ENCODE measurements at regions of chr2 and their contacts with region 1.

Region 1: GRCh38 chr2:191165176-191165643 is 14.4 kb upstream of the STAT4 start:
- DNase-seq: peak; percentile 42 to 65
- ATAC-seq: peak; percentile 65 to 81
- H3K4me3 ChIP-seq: no peak overlapping the region
- H3K27ac ChIP-seq: peak overlapping the region; percentile 85 to 95
- H3K4me1 ChIP-seq: peaks cover 51% of the 10 kb centered on the region
- CTCF ChIP-seq: peak; percentile 92
- EP300 ChIP-seq: no peak
- POLR2A ChIP-seq: no peak
- RAD21 ChIP-seq: peak; percentile 95 to 98

Region 2: GRCh38 chr2:190746971-190747761 is 418.0 kb before region 1 on chr2:
- CTCF ChIA-PET with region 1: no interaction called
- POLR2A ChIA-PET with region 1: no interaction called
- DNase-seq: no peak
- ATAC-seq: no peak
- H3K4me3 ChIP-seq: no peak overlapping the region
- H3K27ac ChIP-seq: no peak overlapping the region
- H3K4me1 ChIP-seq: no peaks in the 10 kb centered on the region
- CTCF ChIP-seq: no peak
- EP300 ChIP-seq: no peak
- POLR2A ChIP-seq: no peak
- RAD21 ChIP-seq: no peak

Region 3: GRCh38 chr2:191150600-191151330 is 14.4 kb before region 1 on chr2 and contains the start of gene STAT4:
- CTCF ChIA-PET with region 1: interaction called, 25 read pairs
- POLR2A ChIA-PET with region 1: no interaction called
- DNase-seq: peak; percentile 43 to 67
- ATAC-seq: peak; percentile 86 to 91
- H3K4me3 ChIP-seq: peak within 1 kb of the TSS; percentile 75
- H3K27ac ChIP-seq: peak within 1 kb of the TSS; percentile 65 to 84
- H3K4me1 ChIP-seq: peaks cover 29% of the 10 kb centered on the region; the same call in 2 of the 3 replicates
- CTCF ChIP-seq: no peak
- EP300 ChIP-seq: no peak
- POLR2A ChIP-seq: 0 out of 2 replicates have a peak, but pooled peaks have one; percentile 5
- RAD21 ChIP-seq: no peak
- polyA plus RNA-seq, gene STAT4: 32.4 and 34.4 TPM in 2 replicates

Region 4: DNA sequence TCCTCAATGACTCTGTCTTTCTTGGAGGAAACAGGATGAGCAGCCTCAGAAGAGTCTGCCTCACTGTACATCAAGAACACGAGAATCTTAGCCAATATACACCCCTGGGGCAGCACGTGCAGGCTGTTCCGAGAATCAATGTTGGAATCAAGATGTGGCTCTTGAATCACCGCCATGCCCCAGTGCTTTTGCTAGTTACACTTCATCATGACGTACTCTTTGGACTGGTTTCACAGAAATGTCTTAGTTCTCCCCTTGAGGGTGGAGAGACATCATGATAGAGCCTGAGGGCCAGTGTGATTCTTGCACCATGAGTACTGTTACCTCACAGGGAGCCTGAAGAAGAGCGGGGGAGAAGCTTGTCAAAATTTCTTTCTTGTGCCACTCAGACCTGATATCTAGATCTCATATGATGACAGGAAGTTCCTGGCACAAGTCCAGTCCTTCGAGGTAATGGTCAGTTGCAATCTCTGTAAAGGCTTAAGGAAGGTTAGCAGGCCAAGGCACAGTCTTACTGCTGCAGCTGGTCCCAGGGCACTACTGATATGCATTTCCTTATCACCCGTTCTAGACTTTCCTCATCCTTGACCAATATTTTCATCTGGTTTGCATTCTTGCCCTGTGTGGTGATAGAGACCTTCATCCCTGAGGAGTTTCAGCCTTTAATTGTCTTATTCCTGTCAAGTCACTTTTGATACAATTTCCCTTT is 13.8 kb after region 1 on chr2:
- CTCF ChIA-PET with region 1: interaction called, 10 read pairs
- POLR2A ChIA-PET with region 1: no interaction called
- DNase-seq: peak in 1 of 2 experiments; percentile 66
- ATAC-seq: peak; percentile 56 to 65; a peak in 5 of 6 replicates
- H3K4me3 ChIP-seq: no peak overlapping the region
- H3K27ac ChIP-seq: peak overlapping the region; percentile 68 to 77
- H3K4me1 ChIP-seq: peaks cover 77% of the 10 kb centered on the region
- CTCF ChIP-seq: no peak
- EP300 ChIP-seq: peak; percentile 32 to 70; a peak in 2 of 5 replicates
- POLR2A ChIP-seq: no peak
- RAD21 ChIP-seq: no peak

Region 5: GRCh38 chr2:191512216-191512835 is 347.1 kb after region 1 on chr2:
- CTCF ChIA-PET with region 1: interaction called, 32 read pairs
- POLR2A ChIA-PET with region 1: no interaction called
- DNase-seq: no peak
- ATAC-seq: no peak
- H3K4me3 ChIP-seq: no peak overlapping the region
- H3K27ac ChIP-seq: peak overlapping the region; percentile 12 to 50; a peak in 4 of 6 replicates
- H3K4me1 ChIP-seq: peaks cover 47% of the 10 kb centered on the region
- CTCF ChIP-seq: no peak
- EP300 ChIP-seq: no peak
- POLR2A ChIP-seq: no peak
- RAD21 ChIP-seq: no peak

Region 6: DNA sequence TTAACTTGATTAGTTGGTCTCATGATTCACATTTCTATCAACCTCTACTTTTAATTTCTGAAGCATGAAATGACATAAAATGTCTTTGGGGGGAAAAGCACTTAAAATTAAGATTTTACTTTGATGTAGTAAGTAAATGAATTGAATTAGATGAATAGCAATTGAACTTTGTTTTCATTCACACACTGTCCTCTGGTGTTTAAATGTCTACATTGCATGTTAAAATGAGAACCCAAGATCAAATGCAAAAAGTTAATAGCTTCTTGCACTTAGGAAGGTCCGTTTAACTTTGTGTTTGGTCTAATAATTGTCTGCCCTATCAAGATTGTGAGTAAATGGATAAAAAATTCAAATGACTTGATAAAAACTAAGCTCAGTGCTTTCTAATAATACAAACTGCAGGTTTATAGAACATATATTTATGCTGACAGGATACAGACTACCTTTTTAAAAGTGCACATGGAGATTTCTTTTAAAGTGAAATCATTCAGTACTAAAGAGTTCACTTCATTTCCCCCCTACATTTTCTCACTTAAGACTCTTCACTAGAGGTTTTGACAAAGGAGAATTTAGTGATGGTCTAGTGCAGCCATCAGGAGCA is 356.5 kb after region 1 on chr2:
- CTCF ChIA-PET with region 1: interaction called, 73 read pairs
- POLR2A ChIA-PET with region 1: no interaction called
- DNase-seq: peak; percentile 41 to 51
- ATAC-seq: peak in 1 of 2 experiments; percentile 58; a peak in 2 of 6 replicates
- H3K4me3 ChIP-seq: no peak overlapping the region
- H3K27ac ChIP-seq: peak overlapping the region; percentile 28 to 31; a peak in 4 of 6 replicates
- H3K4me1 ChIP-seq: peaks cover 24% of the 10 kb centered on the region; the same call in 2 of the 3 replicates
- CTCF ChIP-seq: peak; percentile 94
- EP300 ChIP-seq: no peak
- POLR2A ChIP-seq: no peak
- RAD21 ChIP-seq: peak; percentile 91 to 95